Activated T-helper 2 cell treated with anti-CD3 and anti-CD28 coated beads, Interferon-gamma antibody, Interleukin-2, Interleukin-4, amounts not matched to agents 10 μg/mL and 5 μg/mL and 100 μg/mL, durations not matched to agents 14 hours and 24 hours and 36 hours (primary cell): ENCODE measurements at regions of chr1 and their contacts with region 1.

Region 1: GRCh38 chr1:28505406-28506187 is at the start of gene RCC1:
- DNase-seq: peak; percentile 96
- H3K4me3 Mint-ChIP-seq: peak within 1 kb of the TSS; percentile 100
- H3K27ac Mint-ChIP-seq: peak within 1 kb of the TSS; percentile 99
- H3K4me1 Mint-ChIP-seq: peaks cover 29% of the 10 kb centered on the region
- H3K27me3 Mint-ChIP-seq: no peaks in the 10 kb centered on the region
- total RNA-seq, gene RCC1: 128 and 136 TPM in 2 replicates

Region 2: DNA sequence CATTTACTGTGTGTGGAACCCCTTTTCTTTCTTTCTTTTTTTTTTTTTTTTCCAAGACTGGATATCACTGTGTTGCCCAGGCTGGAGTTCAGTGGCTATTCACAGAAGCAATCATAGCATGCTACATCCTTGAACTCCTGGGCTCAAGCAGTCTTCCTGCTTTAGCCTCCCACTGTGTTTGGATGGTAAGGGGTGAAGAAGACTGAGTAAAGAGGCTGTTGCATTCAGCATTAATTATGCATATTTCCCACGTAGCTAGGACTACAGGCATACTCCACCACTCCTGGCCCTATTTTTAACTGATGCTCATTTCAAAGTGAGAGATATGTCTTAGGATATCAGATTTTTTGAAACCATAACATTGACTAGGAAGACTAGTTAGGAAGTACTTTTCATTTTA is 96.5 kb before region 1 on chr1:
- intact Hi-C with region 1: loop called (anchors 1 kb)
- DNase-seq: no peak
- H3K4me3 Mint-ChIP-seq: no peak overlapping the region
- H3K27ac Mint-ChIP-seq: no peak overlapping the region
- H3K4me1 Mint-ChIP-seq: peaks cover 10% of the 10 kb centered on the region
- H3K27me3 Mint-ChIP-seq: no peaks in the 10 kb centered on the region

Region 3: DNA sequence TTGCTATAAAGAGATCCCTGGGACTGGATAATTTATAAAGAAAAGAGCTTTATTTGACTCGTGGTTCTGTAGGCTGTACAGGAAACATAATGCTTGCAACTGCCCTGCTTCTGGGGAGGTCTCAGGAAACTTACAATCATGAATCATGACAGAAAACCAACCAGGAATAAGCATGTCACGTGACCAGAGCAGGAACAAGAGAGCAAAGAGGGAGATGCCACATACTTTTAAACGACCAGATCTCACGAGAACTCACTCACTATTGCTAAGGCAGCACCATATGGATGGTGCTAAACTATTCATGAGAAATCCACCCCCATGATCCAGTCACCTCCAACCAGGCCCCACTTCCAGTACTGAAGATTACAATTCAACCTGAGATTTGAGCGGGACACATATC is 49.5 kb before region 1 on chr1:
- intact Hi-C with region 1: loop called (anchors 2 kb)
- DNase-seq: peak; percentile 27
- H3K4me3 Mint-ChIP-seq: peak overlapping the region; percentile 19
- H3K27ac Mint-ChIP-seq: peak overlapping the region; percentile 87
- H3K4me1 Mint-ChIP-seq: peaks cover 33% of the 10 kb centered on the region
- H3K27me3 Mint-ChIP-seq: no peaks in the 10 kb centered on the region

Region 4: DNA sequence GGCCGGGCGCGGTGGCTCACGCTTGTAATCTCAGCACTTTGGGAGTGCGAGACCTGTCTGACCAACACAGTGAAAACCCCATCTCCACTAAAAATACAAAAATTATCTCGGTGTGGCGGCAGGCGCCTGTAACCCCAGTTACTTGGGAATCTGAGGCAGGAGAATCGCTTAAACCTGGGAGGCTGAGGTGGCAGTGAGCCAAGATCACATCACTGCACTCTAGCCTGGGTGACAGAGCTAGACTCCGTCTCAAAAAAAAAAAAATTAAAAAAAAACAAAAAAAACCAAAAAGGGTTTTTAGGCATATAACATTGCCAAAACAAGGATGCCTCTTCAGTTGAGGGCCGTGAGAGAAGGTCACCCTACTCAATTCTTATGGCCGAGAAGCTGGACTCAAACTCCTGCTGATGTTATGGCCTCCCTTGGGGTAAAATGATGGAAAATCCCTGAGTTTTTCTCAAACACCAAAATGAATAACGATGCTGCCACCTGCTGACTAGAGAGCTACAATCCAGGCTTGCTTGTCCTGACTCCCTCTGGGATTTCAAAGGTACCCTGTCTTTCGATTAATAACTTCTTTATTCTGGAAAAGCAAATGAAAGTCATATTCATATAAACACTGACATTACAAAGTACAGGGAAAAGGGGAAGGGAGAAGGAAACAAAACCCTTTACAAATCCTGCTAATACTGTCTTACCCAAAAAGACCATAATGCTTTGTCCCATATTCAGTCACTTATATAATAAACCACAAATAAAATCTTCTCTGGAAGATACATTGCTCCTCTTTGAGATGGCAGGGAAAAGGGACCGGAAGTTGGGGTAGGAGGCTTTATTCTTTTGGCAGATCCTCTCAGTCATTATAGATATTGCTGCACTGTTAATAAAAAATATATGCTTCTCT is 97.2 kb after region 1 on chr1:
- intact Hi-C with region 1: no loop called
- DNase-seq: no peak
- H3K4me3 Mint-ChIP-seq: no peak overlapping the region
- H3K27ac Mint-ChIP-seq: no peak overlapping the region
- H3K4me1 Mint-ChIP-seq: peaks cover 16% of the 10 kb centered on the region
- H3K27me3 Mint-ChIP-seq: no peaks in the 10 kb centered on the region